ENCODE measurements at regions of chr9 and their contacts with region 1.

Region 1: DNA sequence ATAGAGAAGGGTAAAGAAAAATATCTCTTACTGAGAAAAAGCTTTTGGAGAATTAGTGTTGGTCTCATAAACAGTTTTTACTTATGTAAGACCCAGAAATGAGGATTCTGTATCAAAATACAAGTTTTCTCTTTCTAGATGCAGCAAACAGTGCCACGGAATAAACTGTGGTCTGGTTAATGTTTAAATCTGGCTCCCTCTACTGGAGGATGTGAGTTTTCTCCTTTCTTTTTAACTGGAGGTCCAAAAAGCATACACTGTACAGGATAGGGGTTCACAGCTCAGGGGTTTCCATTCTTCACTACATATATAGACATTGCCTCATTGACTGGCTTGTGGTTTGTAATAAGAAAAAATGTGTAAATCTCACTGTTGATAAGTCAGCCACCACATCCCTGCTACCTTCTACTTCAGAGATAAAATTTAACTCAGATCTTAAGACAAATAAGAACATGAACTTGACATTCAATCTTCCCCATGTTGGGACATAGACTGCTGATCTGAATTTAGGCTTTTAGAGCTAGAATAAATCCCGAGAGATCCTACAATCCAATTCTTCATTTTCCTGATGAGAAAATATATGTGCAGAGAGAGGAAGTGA is 98.9 kb downstream of the CFAP95 start:
- DNase-seq: no peak
- ATAC-seq: peak; percentile 93
- H3K4me3 ChIP-seq: no peak overlapping the region
- H3K27ac ChIP-seq: no peak overlapping the region
- H3K4me1 ChIP-seq: no peaks in the 10 kb centered on the region
- H3K27me3 ChIP-seq: no peaks in the 10 kb centered on the region
- CTCF ChIP-seq: peak; percentile 58 to 71 (median 61)
- EP300 ChIP-seq: no peak
- POLR2A ChIP-seq: no peak
- RAD21 ChIP-seq: peak; percentile 68

Region 2: GRCh38 chr9:69452110-69452782 is 467.3 kb before region 1 on chr9:
- CTCF ChIA-PET with region 1: no interaction called
- POLR2A ChIA-PET with region 1: no interaction called
- RAD21 ChIA-PET with region 1: no interaction called
- SMC1A ChIA-PET with region 1: no interaction called
- in situ Hi-C with region 1: loop called (anchors 10 kb)
- intact Hi-C with region 1: no loop called
- DNase-seq: no peak
- ATAC-seq: no peak
- H3K4me3 ChIP-seq: no peak overlapping the region
- H3K27ac ChIP-seq: no peak overlapping the region
- H3K4me1 ChIP-seq: no peaks in the 10 kb centered on the region
- H3K27me3 ChIP-seq: peaks cover 0 to 2% of the 10 kb centered on the region in 2 experiments; a peak in 2 of 4 replicates
- CTCF ChIP-seq: no peak
- EP300 ChIP-seq: no peak
- POLR2A ChIP-seq: no peak
- RAD21 ChIP-seq: no peak

Region 3: DNA sequence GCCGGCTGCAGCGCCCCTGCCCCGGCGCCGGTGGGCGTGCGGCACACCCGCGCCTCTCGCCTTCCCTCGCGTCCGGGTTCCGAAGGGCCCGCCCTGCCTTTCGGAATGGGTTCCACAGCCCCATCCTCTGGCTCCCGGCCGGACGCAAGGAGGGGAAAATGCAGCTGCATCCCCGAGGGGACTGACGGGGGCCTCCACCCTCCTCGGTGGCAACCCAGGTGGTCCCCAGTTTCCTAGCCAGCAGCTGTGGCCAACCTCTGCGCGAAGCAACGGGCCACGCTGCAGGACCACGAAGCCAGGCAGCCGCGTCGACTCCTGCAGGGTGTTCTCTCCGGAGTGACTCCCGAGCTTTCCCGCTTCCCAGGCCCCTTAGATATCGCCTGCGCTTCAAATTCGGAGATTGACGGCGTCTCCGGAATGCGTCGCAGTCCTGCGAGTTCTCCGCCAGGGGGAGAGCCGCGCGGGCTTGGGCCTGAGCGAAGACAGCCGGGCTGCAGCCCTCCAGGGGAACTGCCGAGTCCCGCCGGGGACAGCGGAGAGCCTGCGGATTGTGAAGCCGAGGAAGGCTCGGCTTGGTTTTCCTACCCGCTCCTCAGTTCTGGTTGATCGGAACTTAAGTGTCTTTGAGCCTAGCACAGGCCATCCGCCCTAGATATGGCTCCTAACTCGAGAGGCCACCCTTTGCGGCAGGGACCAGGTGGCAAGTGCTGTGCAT is 246.8 kb before region 1 on chr9:
- CTCF ChIA-PET with region 1: interaction called, 15 read pairs
- POLR2A ChIA-PET with region 1: no interaction called
- RAD21 ChIA-PET with region 1: interaction called, 4 read pairs
- SMC1A ChIA-PET with region 1: no interaction called
- in situ Hi-C with region 1: loop called (anchors 5 kb)
- intact Hi-C with region 1: loop called (anchors 2 kb)
- DNase-seq: peak; percentile 3
- ATAC-seq: peak; percentile 99
- H3K4me3 ChIP-seq: peak overlapping the region; percentile 47; the same call in 1 of the 2 replicates
- H3K27ac ChIP-seq: no peak overlapping the region
- H3K4me1 ChIP-seq: no peaks in the 10 kb centered on the region
- H3K27me3 ChIP-seq: peaks cover 4 to 6% of the 10 kb centered on the region in 2 experiments
- CTCF ChIP-seq: peak; percentile 75 to 84 (median 83)
- EP300 ChIP-seq: no peak
- POLR2A ChIP-seq: no peak
- RAD21 ChIP-seq: peak; percentile 62

Region 4: GRCh38 chr9:69877854-69878514 is 41.6 kb before region 1 on chr9:
- CTCF ChIA-PET with region 1: interaction called, 3 read pairs
- POLR2A ChIA-PET with region 1: no interaction called
- RAD21 ChIA-PET with region 1: no interaction called
- SMC1A ChIA-PET with region 1: no interaction called
- in situ Hi-C with region 1: loop called (anchors 10 kb)
- intact Hi-C with region 1: no loop called
- DNase-seq: no peak
- ATAC-seq: peak; percentile 57
- H3K4me3 ChIP-seq: no peak overlapping the region
- H3K27ac ChIP-seq: no peak overlapping the region
- H3K4me1 ChIP-seq: no peaks in the 10 kb centered on the region
- H3K27me3 ChIP-seq: no peaks in the 10 kb centered on the region
- CTCF ChIP-seq: peak; percentile 46 to 53 (median 53); a peak in 5 of 6 replicates
- EP300 ChIP-seq: no peak
- POLR2A ChIP-seq: no peak
- RAD21 ChIP-seq: peak; percentile 76